Left cardiac atrium (tissue), 4 donors: ENCODE measurements at regions of chr12 and their contacts with region 1.

Region 1: GRCh38 chr12:108950991-108951739 is 69.7 kb downstream of the SVOP start:
- DNase-seq: peak; percentile 70
- ATAC-seq: peak; percentile 79 to 81

Region 2: GRCh38 chr12:108803428-108804105 is 147.6 kb before region 1 on chr12:
- intact Hi-C with region 1: loop called in 1 of 2 experiments (anchors 10 kb)
- DNase-seq: peak; percentile 73
- ATAC-seq: peak; percentile 60 to 73

Region 3: DNA sequence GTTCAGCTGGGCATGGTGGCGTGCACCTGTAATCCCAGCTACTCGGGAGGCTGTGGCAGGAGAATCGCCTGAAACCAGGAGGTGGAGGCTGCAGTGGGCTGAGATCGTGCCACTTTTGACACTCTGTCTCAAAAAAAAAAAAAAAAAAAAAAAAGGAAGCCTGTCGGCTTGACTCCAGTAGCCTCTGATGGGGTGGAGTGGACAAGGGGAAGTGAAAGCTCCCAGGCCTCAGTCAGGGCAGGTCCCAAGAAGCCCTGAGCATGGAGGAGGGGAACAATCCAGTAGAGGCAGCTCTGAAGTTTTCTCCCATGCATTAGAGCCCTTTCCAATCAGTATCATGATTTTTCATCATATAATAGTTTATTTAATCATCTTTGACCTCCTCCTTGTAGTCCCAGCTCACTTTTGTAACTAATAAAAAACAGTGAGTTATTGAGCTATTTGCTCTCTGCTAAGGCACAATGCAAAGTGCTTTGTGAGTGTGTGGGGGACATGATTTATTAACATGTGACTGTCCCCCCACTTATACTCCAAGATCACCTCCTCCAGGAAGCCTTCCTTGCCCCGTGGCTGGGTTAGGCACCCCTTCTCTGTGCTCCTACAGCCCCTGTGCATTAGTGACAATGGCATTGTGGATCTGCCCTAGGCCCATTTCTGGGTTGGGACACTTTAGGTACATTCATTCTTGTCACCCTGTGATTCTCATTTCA is 89.1 kb before region 1 on chr12:
- intact Hi-C with region 1: loop called (anchors 10 kb)
- DNase-seq: no peak
- ATAC-seq: no peak